Posterior vena cava (tissue), 2 donors: ENCODE measurements at regions of chr15 and their contacts with region 1.

Region 1: GRCh38 chr15:90482124-90483011 is 47.4 kb upstream of the CRTC3 start:
- DNase-seq: no peak

Region 2: DNA sequence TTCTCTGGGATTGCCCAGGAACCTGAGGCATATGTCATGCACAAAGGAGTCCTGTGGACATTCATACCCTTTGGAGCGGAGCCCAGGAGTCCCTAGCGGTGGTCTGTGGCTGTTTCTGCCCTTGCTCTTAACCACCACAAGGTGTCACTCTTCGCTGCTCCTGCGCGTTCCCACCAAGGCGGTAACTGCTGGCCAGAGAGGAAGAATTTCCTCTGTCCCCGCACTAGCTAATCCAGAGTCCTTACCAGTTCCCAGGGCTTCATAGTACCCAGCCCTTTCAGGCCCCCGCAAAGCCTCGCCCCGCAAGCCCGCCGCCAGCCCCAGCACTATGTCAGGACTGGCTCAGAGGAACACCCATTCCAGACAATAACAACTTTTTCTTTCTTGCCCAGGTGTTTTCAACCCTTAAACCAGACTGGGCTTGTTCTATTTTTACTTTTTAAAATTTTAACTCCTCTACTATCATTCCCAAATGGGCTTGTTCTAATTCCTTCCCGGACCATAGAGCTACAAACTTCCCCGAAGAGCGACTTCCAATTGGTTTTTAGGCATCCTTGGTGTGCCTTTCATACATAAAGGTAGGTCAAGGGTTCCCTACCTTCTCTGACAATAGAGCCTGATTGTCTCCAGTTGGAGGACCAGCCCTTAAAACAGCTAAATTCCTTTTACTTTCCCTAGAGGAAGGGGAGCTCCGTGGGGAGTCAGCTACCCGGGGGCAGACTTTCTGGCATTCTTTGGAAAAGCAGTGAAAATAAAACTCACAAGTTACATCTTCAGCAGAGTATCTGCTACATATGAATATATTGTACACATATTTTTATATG is 162.1 kb before region 1 on chr15:
- intact Hi-C with region 1: loop called in 1 of 2 experiments (anchors 5 kb)
- DNase-seq: peak; percentile 93

Region 3: DNA sequence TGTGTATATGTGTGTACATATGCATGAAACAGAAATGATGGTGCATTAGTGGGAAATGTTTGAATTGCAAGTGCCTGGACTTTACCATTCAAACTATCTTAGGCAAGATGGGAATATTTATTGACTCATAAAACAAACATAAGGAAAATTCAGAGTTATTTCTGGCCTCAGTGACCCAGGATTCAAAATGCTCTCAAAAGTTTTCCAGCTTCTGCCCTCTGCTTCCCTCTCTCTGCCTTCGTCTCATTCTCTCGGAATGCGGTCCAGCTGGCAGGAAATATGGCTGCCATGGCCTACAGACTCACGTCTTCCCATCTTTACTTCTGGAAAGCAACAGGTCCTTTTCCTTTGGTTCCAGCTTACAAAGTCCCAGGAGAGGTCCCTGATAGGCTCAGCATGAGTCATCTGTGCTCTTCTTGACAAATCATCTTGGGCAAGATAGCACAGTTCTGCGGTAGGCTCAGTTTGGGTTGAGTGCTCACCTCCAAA is 139.0 kb before region 1 on chr15:
- intact Hi-C with region 1: loop called in 1 of 2 experiments (anchors 10 kb)
- DNase-seq: peak; percentile 84

Region 4: GRCh38 chr15:90376789-90377188 is 105.6 kb before region 1 on chr15:
- intact Hi-C with region 1: no loop called
- DNase-seq: no peak

Region 5: DNA sequence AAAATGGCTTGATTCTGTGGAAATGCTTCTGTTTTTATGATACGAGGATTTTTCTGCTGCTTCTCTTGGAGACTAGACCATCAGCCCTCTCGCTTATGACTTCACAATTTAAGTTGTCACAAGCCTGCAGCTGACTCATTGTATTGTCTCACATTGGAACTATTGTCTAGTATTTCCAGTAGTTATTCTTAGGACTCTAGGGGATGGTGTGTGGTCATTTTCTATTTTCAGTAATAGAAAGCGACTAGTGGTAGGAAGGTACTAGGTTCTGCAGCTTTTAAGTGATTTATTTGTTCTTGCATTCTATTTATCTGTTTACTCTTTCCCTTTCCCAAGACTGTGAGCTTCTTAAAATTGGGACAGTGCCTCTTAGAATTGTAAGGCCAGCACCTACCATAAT is 19.0 kb before region 1 on chr15:
- intact Hi-C with region 1: no loop called
- DNase-seq: no peak